ENCODE measurements at regions of chr7 and their contacts with region 1.

Region 1: DNA sequence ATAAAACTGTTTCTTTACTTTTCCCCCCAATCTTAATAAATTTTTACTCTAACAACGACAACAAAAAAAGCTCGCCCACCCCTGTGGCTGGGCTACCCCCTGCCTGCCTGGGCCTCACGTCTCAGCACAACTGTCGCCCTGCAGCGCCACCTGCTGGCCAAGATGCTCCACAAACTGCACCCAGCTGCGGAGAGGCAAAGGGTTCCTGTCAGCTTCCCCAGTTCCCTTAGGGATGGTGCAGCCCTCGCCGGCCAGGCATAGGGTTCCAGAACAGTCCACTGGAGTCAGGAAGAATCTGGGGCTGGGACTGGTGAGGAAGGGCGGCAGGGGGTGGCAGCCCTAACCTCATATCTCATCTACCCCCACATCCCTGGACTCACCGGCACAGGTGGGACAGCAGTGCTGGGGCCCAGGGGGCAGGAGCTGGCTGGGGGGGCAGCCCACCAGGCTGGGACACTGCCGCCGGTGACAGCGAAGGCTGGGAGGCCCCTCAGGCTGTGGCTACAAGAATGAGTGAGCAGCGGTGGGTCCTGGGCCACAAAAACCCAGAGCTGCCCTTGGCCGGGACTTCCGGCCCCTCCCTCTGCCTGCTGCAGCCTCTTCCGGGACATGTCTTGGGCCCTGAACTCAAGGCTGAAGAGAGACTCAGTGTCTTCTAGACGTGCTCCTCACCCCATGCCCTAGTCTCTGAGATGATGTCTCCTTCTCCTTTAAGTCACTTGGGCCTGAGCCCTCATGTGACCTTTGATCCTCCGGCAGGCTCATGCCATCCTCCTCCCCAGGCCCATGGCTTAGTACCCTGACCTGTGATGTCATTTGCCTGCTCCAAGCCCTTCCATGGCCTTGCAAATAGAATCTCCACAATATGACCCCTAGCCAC is 21.2 kb downstream of the ATP6V1F start:
- DNase-seq: peak; percentile 75 to 92 (median 84)
- ATAC-seq: peak; percentile 92
- H3K4me3 ChIP-seq: peak overlapping the region; percentile 36
- H3K4me3 Mint-ChIP-seq: no peak overlapping the region
- H3K27ac ChIP-seq: no peak overlapping the region
- H3K27ac Mint-ChIP-seq: no peak overlapping the region
- H3K4me1 ChIP-seq: peaks cover 6% of the 10 kb centered on the region
- H3K4me1 Mint-ChIP-seq: no peaks in the 10 kb centered on the region
- H3K27me3 ChIP-seq: peaks cover 7 to 15% of the 10 kb centered on the region in 2 experiments
- H3K27me3 Mint-ChIP-seq: peaks cover 5% of the 10 kb centered on the region
- CTCF ChIP-seq: peak; percentile 99

Region 2: GRCh38 chr7:128791121-128791961 is 92.5 kb before region 1 on chr7:
- CTCF ChIA-PET with region 1: interaction called, 3 read pairs
- POLR2A ChIA-PET with region 1: no interaction called
- intact Hi-C with region 1: loop called (anchors 1 to 5 kb)
- DNase-seq: peak; percentile 57 to 90 (median 78)
- ATAC-seq: peak; percentile 88
- H3K4me3 ChIP-seq: peak overlapping the region; percentile 79
- H3K4me3 Mint-ChIP-seq: peak overlapping the region; percentile 88
- H3K27ac ChIP-seq: no peak overlapping the region
- H3K27ac Mint-ChIP-seq: no peak overlapping the region
- H3K4me1 ChIP-seq: peaks cover 22% of the 10 kb centered on the region
- H3K4me1 Mint-ChIP-seq: peaks cover 6% of the 10 kb centered on the region
- H3K27me3 ChIP-seq: no peaks in the 10 kb centered on the region
- H3K27me3 Mint-ChIP-seq: no peaks in the 10 kb centered on the region
- CTCF ChIP-seq: no peak

Region 3: DNA sequence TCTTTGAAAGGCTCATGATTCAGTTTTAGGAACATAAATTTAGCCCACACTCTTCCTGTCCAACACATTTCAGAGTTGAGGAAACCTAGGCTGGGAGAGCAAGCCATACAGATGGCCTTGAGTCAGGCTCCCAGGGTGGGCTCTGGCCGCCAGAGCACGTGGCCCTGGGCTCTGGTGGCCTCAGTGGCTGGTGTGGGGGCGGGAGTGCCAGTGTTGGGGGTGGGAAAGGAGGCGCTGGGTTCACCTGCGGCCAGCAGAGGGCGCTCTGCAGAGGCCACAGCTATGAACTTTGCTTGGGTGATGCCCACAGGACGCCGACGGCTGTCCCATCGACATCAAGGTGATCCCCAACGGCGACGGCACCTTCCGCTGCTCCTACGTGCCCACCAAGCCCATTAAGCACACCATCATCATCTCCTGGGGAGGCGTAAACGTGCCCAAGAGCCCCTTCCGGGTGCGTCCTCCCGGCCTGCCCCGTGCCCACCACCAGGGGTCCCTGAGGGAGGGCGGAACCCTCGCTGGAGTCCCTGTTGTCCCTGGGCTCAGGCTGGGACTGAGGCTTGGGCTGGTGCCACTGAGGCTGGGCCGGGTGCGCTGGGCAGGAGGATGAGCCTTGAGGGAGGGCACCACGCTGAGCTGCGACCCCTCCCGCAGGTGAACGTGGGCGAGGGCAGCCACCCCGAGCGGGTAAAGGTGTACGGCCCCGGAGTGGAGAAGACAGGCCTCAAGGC is 41.8 kb before region 1 on chr7:
- CTCF ChIA-PET with region 1: interaction called, 8 read pairs
- POLR2A ChIA-PET with region 1: no interaction called
- intact Hi-C with region 1: loop called (anchors 1 kb)
- DNase-seq: peak in 13 of 14 experiments; percentile 20 to 79 (median 49)
- ATAC-seq: peak; percentile 64
- H3K4me3 ChIP-seq: no peak overlapping the region
- H3K4me3 Mint-ChIP-seq: no peak overlapping the region
- H3K27ac ChIP-seq: no peak overlapping the region
- H3K27ac Mint-ChIP-seq: no peak overlapping the region
- H3K4me1 ChIP-seq: peaks cover 9% of the 10 kb centered on the region
- H3K4me1 Mint-ChIP-seq: no peaks in the 10 kb centered on the region
- H3K27me3 ChIP-seq: no peaks in the 10 kb centered on the region
- H3K27me3 Mint-ChIP-seq: no peaks in the 10 kb centered on the region
- CTCF ChIP-seq: peak; percentile 74

Region 4: GRCh38 chr7:128869138-128869943 is 14.5 kb before region 1 on chr7:
- CTCF ChIA-PET with region 1: interaction called, 45 read pairs
- POLR2A ChIA-PET with region 1: interaction called, 4 read pairs
- intact Hi-C with region 1: no loop called
- DNase-seq: peak in 13 of 14 experiments; percentile 6 to 81 (median 32)
- ATAC-seq: peak; percentile 92
- H3K4me3 ChIP-seq: peak overlapping the region; percentile 52
- H3K4me3 Mint-ChIP-seq: peak overlapping the region; percentile 60
- H3K27ac ChIP-seq: no peak overlapping the region
- H3K27ac Mint-ChIP-seq: no peak overlapping the region
- H3K4me1 ChIP-seq: peaks cover 21% of the 10 kb centered on the region
- H3K4me1 Mint-ChIP-seq: peaks cover 28% of the 10 kb centered on the region
- H3K27me3 ChIP-seq: peaks cover 4 to 5% of the 10 kb centered on the region in 2 experiments
- H3K27me3 Mint-ChIP-seq: no peaks in the 10 kb centered on the region
- CTCF ChIP-seq: no peak